Panc1 (cell line): ENCODE measurements at regions of chr6 and their contacts with region 1.

Region 1: GRCh38 chr6:87645080-87645479 is 55.1 kb downstream of the ORC3 start:
- DNase-seq: no peak
- ATAC-seq: no peak
- H3K4me3 ChIP-seq: no peak overlapping the region
- H3K27ac ChIP-seq: no peak overlapping the region
- H3K4me1 ChIP-seq: no peaks in the 10 kb centered on the region
- H3K27me3 ChIP-seq: no peaks in the 10 kb centered on the region
- CTCF ChIP-seq: no peak

Region 2: GRCh38 chr6:87436435-87436834 is 208.6 kb before region 1 on chr6:
- CTCF ChIA-PET with region 1: no interaction called
- POLR2A ChIA-PET with region 1: no interaction called
- in situ Hi-C with region 1: no loop called
- intact Hi-C with region 1: no loop called
- DNase-seq: no peak
- ATAC-seq: no peak
- H3K4me3 ChIP-seq: no peak overlapping the region
- H3K27ac ChIP-seq: no peak overlapping the region
- H3K4me1 ChIP-seq: no peaks in the 10 kb centered on the region
- H3K27me3 ChIP-seq: no peaks in the 10 kb centered on the region
- CTCF ChIP-seq: no peak

Region 3: GRCh38 chr6:87656857-87657256 is 11.8 kb after region 1 on chr6:
- CTCF ChIA-PET with region 1: interaction called, 12 read pairs
- POLR2A ChIA-PET with region 1: no interaction called
- in situ Hi-C with region 1: no loop called
- intact Hi-C with region 1: no loop called
- DNase-seq: no peak
- ATAC-seq: no peak
- H3K4me3 ChIP-seq: no peak overlapping the region
- H3K27ac ChIP-seq: no peak overlapping the region
- H3K4me1 ChIP-seq: no peaks in the 10 kb centered on the region
- H3K27me3 ChIP-seq: no peaks in the 10 kb centered on the region
- CTCF ChIP-seq: no peak

Region 4: DNA sequence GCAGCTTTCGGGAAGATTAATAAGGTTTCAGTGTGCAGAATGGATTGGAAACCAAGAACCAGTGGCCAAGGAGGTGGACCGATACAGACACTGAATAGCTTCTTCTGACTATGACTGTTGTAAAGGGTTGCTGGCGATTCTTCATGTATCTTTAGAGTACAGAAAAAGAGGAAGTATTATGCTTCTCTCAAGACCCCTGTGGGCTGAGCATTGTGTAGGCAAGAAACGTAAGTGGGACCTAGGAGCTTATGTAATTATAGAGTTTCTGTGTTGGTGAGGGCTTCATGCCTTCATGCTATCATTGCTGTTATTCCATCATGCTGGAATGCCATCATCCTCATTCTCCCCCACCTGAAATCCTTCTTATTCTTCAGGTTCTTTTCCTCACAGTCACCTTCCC is 162.4 kb after region 1 on chr6:
- CTCF ChIA-PET with region 1: no interaction called
- POLR2A ChIA-PET with region 1: no interaction called
- in situ Hi-C with region 1: no loop called
- intact Hi-C with region 1: no loop called
- DNase-seq: no peak
- ATAC-seq: no peak
- H3K4me3 ChIP-seq: no peak overlapping the region
- H3K27ac ChIP-seq: no peak overlapping the region
- H3K4me1 ChIP-seq: no peaks in the 10 kb centered on the region
- H3K27me3 ChIP-seq: no peaks in the 10 kb centered on the region
- CTCF ChIP-seq: no peak